Common myeloid progenitor, CD34-positive (primary cell): ENCODE measurements at regions of chr1 and their contacts with region 1.

Region 1: GRCh38 chr1:171801487-171801891 is 20.0 kb downstream of the METTL13 start:
- DNase-seq: peak in 2 of 3 donors; percentile 53 to 61
- H3K4me3 ChIP-seq: no peak overlapping the region
- H3K27ac ChIP-seq: no peak overlapping the region
- H3K4me1 ChIP-seq: peaks cover 0 to 52% (median 20%) of the 10 kb centered on the region in 4 experiments
- H3K27me3 ChIP-seq: no peaks in the 10 kb centered on the region

Region 2: DNA sequence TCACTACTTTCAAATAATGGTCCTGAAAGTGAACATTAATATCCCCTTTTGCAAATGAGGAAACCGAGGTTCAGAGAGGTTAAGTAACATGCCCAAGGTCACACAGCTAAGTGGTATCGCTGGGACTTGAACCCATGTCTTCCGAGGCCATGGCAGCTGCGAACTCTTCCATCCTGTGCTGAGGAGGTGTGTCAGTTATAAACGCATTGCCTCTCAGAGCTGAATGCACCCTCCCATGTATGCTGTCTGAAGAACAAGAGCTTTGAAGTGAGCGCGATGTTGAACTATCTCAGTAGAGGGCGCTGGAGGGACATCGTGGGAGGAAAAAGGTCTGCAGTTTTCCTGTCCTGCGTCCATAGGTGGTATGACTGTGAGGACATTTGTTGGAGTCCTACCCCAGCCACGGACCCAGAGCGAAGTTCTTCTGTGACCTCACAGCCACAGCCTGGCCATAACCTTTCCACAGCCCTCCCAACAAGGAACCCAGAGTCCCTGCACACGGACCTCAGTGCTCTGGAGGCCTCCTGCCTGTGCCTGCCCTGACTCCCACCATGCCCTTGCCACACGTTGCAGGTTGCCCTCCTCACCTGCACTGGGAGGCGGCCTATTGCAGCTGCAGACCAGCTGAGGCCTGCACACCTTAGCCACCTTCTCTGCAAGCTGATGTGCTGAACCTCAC is 156.5 kb before region 1 on chr1:
- CTCF ChIA-PET with region 1: interaction called, 14 read pairs
- POLR2A ChIA-PET with region 1: no interaction called
- DNase-seq: peak; percentile 79 to 93 (median 91)
- H3K4me3 ChIP-seq: peak overlapping the region in 2 of 7 experiments; percentile 9 to 59
- H3K27ac ChIP-seq: no peak overlapping the region
- H3K4me1 ChIP-seq: peaks cover 0 to 2% (median 0%) of the 10 kb centered on the region in 4 experiments
- H3K27me3 ChIP-seq: no peaks in the 10 kb centered on the region

Region 3: GRCh38 chr1:171781176-171781875 is 20.2 kb before region 1 on chr1 and contains the start of gene METTL13:
- CTCF ChIA-PET with region 1: interaction called, 115 read pairs
- POLR2A ChIA-PET with region 1: interaction called, 3 read pairs
- DNase-seq: peak; percentile 99 to 100 (median 99)
- H3K4me3 ChIP-seq: peak within 1 kb of the TSS; percentile 61 to 98 (median 90)
- H3K27ac ChIP-seq: peak within 1 kb of the TSS; percentile 78 to 84
- H3K4me1 ChIP-seq: peaks cover 6 to 48% (median 34%) of the 10 kb centered on the region in 4 experiments
- H3K27me3 ChIP-seq: no peaks in the 10 kb centered on the region

Region 4: GRCh38 chr1:171817511-171818265 is 16.2 kb after region 1 on chr1:
- CTCF ChIA-PET with region 1: interaction called, 21 read pairs
- POLR2A ChIA-PET with region 1: no interaction called
- DNase-seq: peak in 2 of 3 donors; percentile 53 to 60
- H3K4me3 ChIP-seq: no peak overlapping the region
- H3K27ac ChIP-seq: no peak overlapping the region
- H3K4me1 ChIP-seq: peaks cover 0 to 6% (median 2%) of the 10 kb centered on the region in 4 experiments
- H3K27me3 ChIP-seq: no peaks in the 10 kb centered on the region

Region 5: DNA sequence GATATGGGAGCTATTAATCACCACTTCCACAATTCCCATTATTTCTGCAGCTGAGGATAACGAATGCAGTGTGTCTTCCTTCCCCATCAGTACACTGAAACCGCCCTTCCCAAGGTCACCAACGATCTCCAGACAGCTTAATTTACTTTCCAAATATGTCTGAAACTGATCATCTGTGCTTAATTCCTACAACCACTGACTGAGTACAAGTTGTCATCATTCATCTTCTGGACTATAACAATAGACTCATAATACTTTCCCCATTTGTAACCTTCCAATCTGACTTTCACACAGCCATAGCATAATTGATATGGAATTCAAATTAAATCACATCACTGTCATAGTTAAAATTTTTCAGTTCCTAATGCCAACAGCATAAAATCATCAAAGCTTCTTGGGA is 57.2 kb after region 1 on chr1:
- CTCF ChIA-PET with region 1: interaction called, 11 read pairs
- POLR2A ChIA-PET with region 1: no interaction called
- DNase-seq: no peak
- H3K4me3 ChIP-seq: no peak overlapping the region
- H3K27ac ChIP-seq: no peak overlapping the region
- H3K4me1 ChIP-seq: no peaks in the 10 kb centered on the region
- H3K27me3 ChIP-seq: no peaks in the 10 kb centered on the region

Region 6: GRCh38 chr1:171935664-171936063 is 134.2 kb after region 1 on chr1:
- CTCF ChIA-PET with region 1: no interaction called
- POLR2A ChIA-PET with region 1: no interaction called
- DNase-seq: no peak
- H3K4me3 ChIP-seq: no peak overlapping the region
- H3K27ac ChIP-seq: no peak overlapping the region
- H3K4me1 ChIP-seq: no peaks in the 10 kb centered on the region
- H3K27me3 ChIP-seq: no peaks in the 10 kb centered on the region

Region 7: GRCh38 chr1:171965777-171966176 is 164.3 kb after region 1 on chr1:
- CTCF ChIA-PET with region 1: interaction called, 45 read pairs
- POLR2A ChIA-PET with region 1: no interaction called
- DNase-seq: no peak
- H3K4me3 ChIP-seq: no peak overlapping the region
- H3K27ac ChIP-seq: no peak overlapping the region
- H3K4me1 ChIP-seq: peaks cover 20 to 50% (median 27%) of the 10 kb centered on the region in 4 experiments
- H3K27me3 ChIP-seq: no peaks in the 10 kb centered on the region

Region 8: DNA sequence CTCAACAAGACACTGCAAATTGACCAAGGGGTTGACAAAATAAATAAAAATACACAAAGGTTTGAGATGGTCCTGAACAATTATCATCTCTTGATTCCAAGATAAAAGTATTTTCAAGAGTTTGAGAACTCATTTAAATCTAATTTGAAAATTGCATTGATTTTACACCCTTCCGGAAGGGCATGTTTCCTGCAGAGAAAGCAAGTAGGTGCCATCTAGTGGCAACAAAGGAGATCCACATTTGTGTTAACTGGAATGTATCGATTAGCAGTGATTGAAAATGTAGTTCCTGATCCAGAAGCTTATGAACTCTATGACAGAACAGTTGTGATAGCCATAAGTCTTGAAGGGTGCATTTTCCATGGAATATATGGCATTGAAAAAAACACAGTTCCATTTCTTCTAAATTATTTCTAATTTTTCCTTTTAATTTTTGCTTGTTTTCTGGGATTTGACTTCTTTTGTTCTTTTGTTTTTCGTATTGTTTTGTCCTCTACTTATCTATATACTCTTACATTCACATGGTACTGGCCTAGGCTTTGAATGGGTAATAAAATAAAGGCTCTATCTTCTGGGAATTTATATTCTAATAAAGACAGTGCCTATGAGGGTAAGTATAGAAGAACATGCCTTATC is 183.5 kb after region 1 on chr1:
- CTCF ChIA-PET with region 1: interaction called, 568 read pairs
- POLR2A ChIA-PET with region 1: interaction called, 3 read pairs
- DNase-seq: peak; percentile 46 to 56 (median 49)
- H3K4me3 ChIP-seq: no peak overlapping the region
- H3K27ac ChIP-seq: no peak overlapping the region
- H3K4me1 ChIP-seq: peaks cover 0 to 10% (median 0%) of the 10 kb centered on the region in 4 experiments
- H3K27me3 ChIP-seq: no peaks in the 10 kb centered on the region